IMR-90 (cell line): ENCODE measurements at regions of chr1 and their contacts with region 1.

Region 1: GRCh38 chr1:88683541-88684481 is at the start of gene PKN2:
- DNase-seq: peak; percentile 98
- ATAC-seq: peak; percentile 97
- H3K4me3 ChIP-seq: peak within 1 kb of the TSS; percentile 75
- H3K27ac ChIP-seq: peak within 1 kb of the TSS; percentile 86
- H3K4me1 ChIP-seq: no peaks in the 10 kb centered on the region
- H3K27me3 ChIP-seq: no peaks in the 10 kb centered on the region
- CTCF ChIP-seq: peak; percentile 31
- POLR2A ChIP-seq: peak; percentile 81
- RAD21 ChIP-seq: 0 out of 2 replicates have a peak, but pooled peaks have one; percentile 6
- total RNA-seq, gene PKN2: 22.2 and 40.8 TPM in 2 replicates

Region 2: DNA sequence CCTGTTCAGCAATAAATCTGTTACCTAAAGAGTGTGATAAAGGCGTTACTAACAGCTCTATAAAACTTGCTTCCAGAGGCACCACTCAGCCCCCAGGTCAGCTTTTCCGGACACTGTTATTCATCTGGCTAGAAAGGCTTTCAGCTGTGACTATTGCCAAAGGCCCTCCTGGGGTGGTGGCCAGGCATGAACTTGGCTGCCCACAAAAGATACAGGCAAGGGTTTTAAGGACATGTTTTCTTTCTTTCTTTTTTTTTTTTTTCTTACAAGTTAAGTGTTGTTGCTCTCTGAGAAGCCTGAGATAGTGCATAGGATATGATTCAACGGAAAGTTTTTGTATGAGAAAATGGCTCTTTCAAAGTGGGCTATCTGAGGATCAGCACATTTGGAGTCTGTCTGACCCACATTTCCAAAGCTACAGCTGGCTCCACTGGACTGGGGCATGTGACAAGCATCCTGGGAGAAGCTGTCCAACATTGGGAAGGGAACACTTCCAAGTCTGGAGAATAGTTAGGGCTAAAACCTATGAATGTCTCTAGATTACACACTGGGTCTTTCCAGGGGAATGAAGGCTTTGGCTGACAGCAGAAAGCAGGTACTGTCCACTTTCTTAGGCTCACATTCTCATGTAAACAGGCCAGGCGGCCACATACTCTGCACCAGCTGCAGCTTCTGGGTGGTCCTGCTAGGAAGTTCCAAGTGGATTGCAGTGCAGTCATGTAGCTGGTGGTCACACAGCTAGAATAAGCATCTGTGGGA is 715.4 kb before region 1 on chr1:
- CTCF ChIA-PET with region 1: no interaction called
- POLR2A ChIA-PET with region 1: no interaction called
- dilution Hi-C with region 1: no loop called
- in situ Hi-C with region 1: no loop called
- intact Hi-C with region 1: no loop called
- DNase-seq: peak; percentile 69
- ATAC-seq: peak; percentile 66
- H3K4me3 ChIP-seq: no peak overlapping the region
- H3K27ac ChIP-seq: peak overlapping the region; percentile 28; the same call in 1 of the 2 replicates
- H3K4me1 ChIP-seq: peaks cover 12% of the 10 kb centered on the region
- H3K27me3 ChIP-seq: no peaks in the 10 kb centered on the region
- CTCF ChIP-seq: no peak
- POLR2A ChIP-seq: no peak
- RAD21 ChIP-seq: no peak

Region 3: DNA sequence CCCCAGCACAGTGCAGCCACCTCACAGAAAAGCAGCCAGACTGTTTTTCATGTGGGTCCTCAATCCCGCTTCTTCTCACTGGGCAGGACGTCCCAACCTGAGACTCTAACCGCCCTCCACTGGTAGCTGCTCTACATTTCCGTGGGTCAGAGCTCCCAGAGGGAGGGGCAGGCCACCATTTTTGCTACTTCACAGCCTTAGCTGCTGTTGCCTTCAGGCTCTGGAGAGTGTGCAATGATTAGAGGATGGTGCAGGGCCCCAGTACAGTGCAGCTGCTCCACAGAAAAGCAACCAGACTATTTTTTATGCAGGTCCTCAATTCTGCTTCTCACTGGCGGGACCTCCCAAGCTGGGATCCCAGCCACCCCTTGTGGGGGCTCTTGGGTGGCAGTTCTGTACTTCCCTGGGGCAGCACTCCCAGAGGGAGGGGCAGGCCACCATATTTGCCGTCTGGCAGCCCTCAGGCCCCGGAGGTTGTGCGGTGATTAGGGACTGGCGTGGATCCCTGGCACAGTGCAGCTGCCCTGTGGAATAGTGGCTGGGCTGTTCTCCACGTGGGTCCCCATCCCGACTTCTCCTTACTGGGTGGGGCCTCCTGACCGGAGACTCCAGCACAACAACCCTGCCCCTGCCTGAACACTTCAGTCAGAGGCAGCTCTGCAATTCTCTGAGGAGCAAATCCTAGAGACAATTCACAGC is 647.3 kb before region 1 on chr1:
- CTCF ChIA-PET with region 1: no interaction called
- POLR2A ChIA-PET with region 1: no interaction called
- dilution Hi-C with region 1: no loop called
- in situ Hi-C with region 1: no loop called
- intact Hi-C with region 1: no loop called
- DNase-seq: no peak
- ATAC-seq: no peak
- H3K4me3 ChIP-seq: no peak overlapping the region
- H3K27ac ChIP-seq: no peak overlapping the region
- H3K4me1 ChIP-seq: no peaks in the 10 kb centered on the region
- H3K27me3 ChIP-seq: no peaks in the 10 kb centered on the region
- CTCF ChIP-seq: no peak
- POLR2A ChIP-seq: no peak
- RAD21 ChIP-seq: no peak

Region 4: GRCh38 chr1:88731475-88732269 is 47.9 kb after region 1 on chr1:
- CTCF ChIA-PET with region 1: interaction called, 4 read pairs
- POLR2A ChIA-PET with region 1: no interaction called
- dilution Hi-C with region 1: no loop called
- in situ Hi-C with region 1: no loop called
- intact Hi-C with region 1: loop called (anchors 2 kb)
- DNase-seq: peak; percentile 97
- ATAC-seq: peak; percentile 95
- H3K4me3 ChIP-seq: peak overlapping the region; percentile 7; the same call in 1 of the 2 replicates
- H3K27ac ChIP-seq: no peak overlapping the region
- H3K4me1 ChIP-seq: peaks cover 5% of the 10 kb centered on the region
- H3K27me3 ChIP-seq: no peaks in the 10 kb centered on the region
- CTCF ChIP-seq: no peak
- POLR2A ChIP-seq: no peak
- RAD21 ChIP-seq: no peak